MCF 10A (cell line): ENCODE measurements at regions of chr18 and their contacts with region 1.

Region 1: GRCh38 chr18:3297025-3297984 is 35.4 kb downstream of the MYL12B start:
- DNase-seq: peak; percentile 97
- H3K4me3 Mint-ChIP-seq: peak overlapping the region; percentile 95
- H3K27ac Mint-ChIP-seq: peak overlapping the region; percentile 47
- H3K4me1 Mint-ChIP-seq: peaks cover 5% of the 10 kb centered on the region
- H3K27me3 Mint-ChIP-seq: no peaks in the 10 kb centered on the region
- CTCF ChIP-seq: peak; percentile 36

Region 2: GRCh38 chr18:3261371-3262246 is 35.7 kb before region 1 on chr18 and contains the start of gene MYL12B:
- CTCF ChIA-PET with region 1: interaction called, 6 read pairs
- POLR2A ChIA-PET with region 1: interaction called, 16 read pairs
- intact Hi-C with region 1: no loop called
- DNase-seq: peak; percentile 78
- H3K4me3 Mint-ChIP-seq: peak within 1 kb of the TSS; percentile 80
- H3K27ac Mint-ChIP-seq: peak within 1 kb of the TSS; percentile 82
- H3K4me1 Mint-ChIP-seq: peaks cover 43% of the 10 kb centered on the region
- H3K27me3 Mint-ChIP-seq: no peaks in the 10 kb centered on the region
- CTCF ChIP-seq: no peak
- total RNA-seq, gene MYL12B: 175 and 229 TPM in 2 replicates

Region 3: DNA sequence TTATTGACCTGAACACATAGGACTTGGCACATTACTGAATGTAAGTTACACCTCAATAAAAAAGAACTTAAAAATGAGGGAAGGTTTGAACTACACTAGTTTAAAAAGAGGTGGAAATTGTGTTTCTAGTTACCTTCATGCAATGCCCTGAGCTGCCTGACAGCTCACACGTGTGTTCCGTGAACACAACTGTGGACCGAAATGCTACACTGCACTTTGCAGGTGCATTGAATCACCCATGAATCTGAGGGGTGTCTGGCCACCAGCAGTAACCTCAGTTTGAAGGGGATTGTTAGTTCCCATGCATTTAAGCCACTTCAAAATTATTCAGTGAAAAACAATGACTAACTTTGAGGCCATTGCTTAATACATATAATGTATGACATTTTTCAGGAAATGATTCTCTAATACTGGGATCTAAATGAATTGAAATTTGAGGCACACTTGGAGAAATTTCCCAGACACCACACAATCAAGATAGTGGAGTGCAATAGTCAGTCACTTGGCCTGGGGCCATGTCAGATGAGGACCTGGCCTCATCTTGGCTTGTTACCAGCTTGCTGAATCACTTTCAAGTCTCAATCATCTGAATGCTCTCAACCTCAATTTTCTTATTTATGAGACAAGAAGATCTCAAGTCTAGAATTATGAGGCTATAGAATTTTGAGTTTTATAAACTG is 24.0 kb after region 1 on chr18:
- CTCF ChIA-PET with region 1: interaction called, 5 read pairs
- POLR2A ChIA-PET with region 1: interaction called, 6 read pairs
- intact Hi-C with region 1: loop called (anchors 2 kb)
- DNase-seq: peak; percentile 99
- H3K4me3 Mint-ChIP-seq: no peak overlapping the region
- H3K27ac Mint-ChIP-seq: no peak overlapping the region
- H3K4me1 Mint-ChIP-seq: peaks cover 17% of the 10 kb centered on the region
- H3K27me3 Mint-ChIP-seq: no peaks in the 10 kb centered on the region
- CTCF ChIP-seq: no peak

Region 4: GRCh38 chr18:3585656-3586509 is 288.6 kb after region 1 on chr18:
- CTCF ChIA-PET with region 1: interaction called, 11 read pairs
- POLR2A ChIA-PET with region 1: interaction called, 7 read pairs
- intact Hi-C with region 1: no loop called
- DNase-seq: peak; percentile 90
- H3K4me3 Mint-ChIP-seq: no peak overlapping the region
- H3K27ac Mint-ChIP-seq: no peak overlapping the region
- H3K4me1 Mint-ChIP-seq: peaks cover 14% of the 10 kb centered on the region
- H3K27me3 Mint-ChIP-seq: no peaks in the 10 kb centered on the region
- CTCF ChIP-seq: peak; percentile 64

Region 5: GRCh38 chr18:3623769-3624545 is 326.7 kb after region 1 on chr18:
- CTCF ChIA-PET with region 1: interaction called, 4 read pairs
- POLR2A ChIA-PET with region 1: interaction called, 10 read pairs
- intact Hi-C with region 1: no loop called
- DNase-seq: peak; percentile 95
- H3K4me3 Mint-ChIP-seq: peak overlapping the region; percentile 74
- H3K27ac Mint-ChIP-seq: peak overlapping the region; percentile 99
- H3K4me1 Mint-ChIP-seq: peaks cover 35% of the 10 kb centered on the region
- H3K27me3 Mint-ChIP-seq: no peaks in the 10 kb centered on the region
- CTCF ChIP-seq: no peak